CD4-positive, alpha-beta memory T cell (primary cell): ENCODE measurements at regions of chr2 and their contacts with region 1.

Region 1: DNA sequence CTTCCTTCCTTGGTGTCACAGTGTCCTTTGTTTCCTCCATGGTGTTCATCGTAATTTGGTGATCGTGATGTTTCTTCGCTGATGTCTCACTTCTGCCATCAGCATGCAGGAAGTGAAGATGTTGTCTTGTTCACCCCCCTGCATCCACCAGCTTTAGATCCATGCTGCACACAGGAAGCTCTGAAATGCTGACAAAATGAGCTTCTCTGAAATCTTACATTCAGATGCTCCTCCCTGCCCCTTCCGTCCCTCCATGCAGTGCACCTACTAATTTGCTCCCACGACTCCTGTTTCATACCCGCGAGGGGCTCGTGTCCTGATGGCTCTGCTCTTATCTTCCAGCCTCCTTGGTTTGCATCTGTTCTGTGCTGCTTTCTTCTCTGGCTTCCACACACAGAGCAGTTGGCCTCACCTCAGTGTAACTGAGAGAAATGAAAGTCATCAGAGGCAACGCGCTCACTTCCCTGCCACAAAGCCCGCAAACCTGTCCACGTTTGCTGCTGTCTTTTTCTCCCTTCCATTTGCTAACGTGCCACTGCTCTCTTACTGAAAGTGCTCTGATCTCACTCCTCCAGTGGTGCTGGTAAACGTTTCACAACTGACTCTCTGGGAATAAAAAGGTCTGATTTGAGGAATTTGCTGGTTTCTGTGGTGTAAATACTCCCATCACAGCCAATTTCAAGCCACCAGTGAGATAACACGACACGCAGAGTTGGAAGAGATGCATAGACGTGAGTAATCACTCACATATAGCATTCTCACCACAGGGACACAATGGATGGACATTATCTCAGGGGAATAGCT is 41.0 kb upstream of the MGAT4A start:
- DNase-seq: peak; percentile 82 to 92 (median 89)
- H3K4me3 ChIP-seq: peak overlapping the region; percentile 31 to 57
- H3K4me3 Mint-ChIP-seq: peak overlapping the region; percentile 92 to 99 (median 94)
- H3K27ac ChIP-seq: peak overlapping the region; percentile 63
- H3K27ac Mint-ChIP-seq: peak overlapping the region; percentile 89 to 100 (median 98)
- H3K4me1 ChIP-seq: peaks cover 79% of the 10 kb centered on the region
- H3K4me1 Mint-ChIP-seq: peaks cover 60 to 93% (median 76%) of the 10 kb centered on the region in 4 donors
- H3K27me3 ChIP-seq: no peaks in the 10 kb centered on the region
- H3K27me3 Mint-ChIP-seq: no peaks in the 10 kb centered on the region

Region 2: GRCh38 chr2:98465456-98466226 is 306.3 kb before region 1 on chr2:
- CTCF ChIA-PET with region 1: no interaction called
- POLR2A ChIA-PET with region 1: interaction called, 18 read pairs
- intact Hi-C with region 1: no loop called
- DNase-seq: peak; percentile 84 to 93 (median 84)
- H3K4me3 ChIP-seq: peak overlapping the region; percentile 17 to 33
- H3K4me3 Mint-ChIP-seq: peak overlapping the region; percentile 80 to 98 (median 90)
- H3K27ac ChIP-seq: peak overlapping the region; percentile 71
- H3K27ac Mint-ChIP-seq: peak overlapping the region; percentile 92 to 98 (median 97)
- H3K4me1 ChIP-seq: peaks cover 96% of the 10 kb centered on the region
- H3K4me1 Mint-ChIP-seq: peaks cover 71 to 93% (median 82%) of the 10 kb centered on the region in 4 donors
- H3K27me3 ChIP-seq: no peaks in the 10 kb centered on the region
- H3K27me3 Mint-ChIP-seq: no peaks in the 10 kb centered on the region

Region 3: DNA sequence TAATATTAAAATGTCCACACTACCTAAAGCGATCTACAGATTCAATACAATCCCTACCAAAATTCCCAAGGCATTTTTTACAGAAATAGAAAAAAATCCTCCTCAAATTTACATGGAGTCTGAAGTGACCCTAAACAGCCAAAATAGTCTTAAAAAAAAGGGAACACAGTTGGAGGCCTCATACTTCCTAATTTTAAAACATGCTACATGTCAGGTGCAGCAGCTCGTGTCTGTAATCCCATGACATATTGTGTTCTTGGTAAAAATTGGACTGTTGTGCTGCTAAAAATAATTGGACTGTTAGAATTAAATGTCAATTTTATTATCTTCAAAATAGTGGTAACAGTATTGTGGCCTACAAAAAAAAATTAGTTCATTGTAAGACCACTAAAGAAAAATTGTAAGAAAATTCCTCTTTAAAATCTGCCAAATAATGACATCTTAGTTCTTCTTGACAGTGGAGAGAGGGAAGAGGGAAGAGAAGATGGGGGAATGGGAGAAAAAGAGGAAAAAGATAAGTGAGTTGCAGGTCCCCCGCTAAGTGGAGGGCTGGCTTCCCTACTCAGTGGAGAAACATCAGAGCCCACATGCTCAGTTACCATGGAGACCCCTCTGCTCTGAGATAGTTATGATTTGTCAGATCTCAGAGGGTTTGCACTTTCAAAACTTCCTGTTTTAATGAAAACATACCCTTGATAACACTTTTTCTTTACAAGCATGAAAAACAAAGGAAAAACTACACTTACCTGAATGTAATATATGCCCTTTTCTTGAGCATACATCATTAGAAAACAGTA is 117.0 kb before region 1 on chr2:
- CTCF ChIA-PET with region 1: interaction called, 8 read pairs
- POLR2A ChIA-PET with region 1: interaction called, 173 read pairs
- intact Hi-C with region 1: loop called (anchors 2 kb)
- DNase-seq: peak; percentile 47 to 67 (median 50)
- H3K4me3 ChIP-seq: no peak overlapping the region
- H3K4me3 Mint-ChIP-seq: peak overlapping the region; percentile 19 to 73 (median 55)
- H3K27ac ChIP-seq: peak overlapping the region; percentile 55
- H3K27ac Mint-ChIP-seq: peak overlapping the region; percentile 88 to 94 (median 93)
- H3K4me1 ChIP-seq: peaks cover 93% of the 10 kb centered on the region
- H3K4me1 Mint-ChIP-seq: peaks cover 65 to 95% (median 80%) of the 10 kb centered on the region in 4 donors
- H3K27me3 ChIP-seq: no peaks in the 10 kb centered on the region
- H3K27me3 Mint-ChIP-seq: no peaks in the 10 kb centered on the region

Region 4: DNA sequence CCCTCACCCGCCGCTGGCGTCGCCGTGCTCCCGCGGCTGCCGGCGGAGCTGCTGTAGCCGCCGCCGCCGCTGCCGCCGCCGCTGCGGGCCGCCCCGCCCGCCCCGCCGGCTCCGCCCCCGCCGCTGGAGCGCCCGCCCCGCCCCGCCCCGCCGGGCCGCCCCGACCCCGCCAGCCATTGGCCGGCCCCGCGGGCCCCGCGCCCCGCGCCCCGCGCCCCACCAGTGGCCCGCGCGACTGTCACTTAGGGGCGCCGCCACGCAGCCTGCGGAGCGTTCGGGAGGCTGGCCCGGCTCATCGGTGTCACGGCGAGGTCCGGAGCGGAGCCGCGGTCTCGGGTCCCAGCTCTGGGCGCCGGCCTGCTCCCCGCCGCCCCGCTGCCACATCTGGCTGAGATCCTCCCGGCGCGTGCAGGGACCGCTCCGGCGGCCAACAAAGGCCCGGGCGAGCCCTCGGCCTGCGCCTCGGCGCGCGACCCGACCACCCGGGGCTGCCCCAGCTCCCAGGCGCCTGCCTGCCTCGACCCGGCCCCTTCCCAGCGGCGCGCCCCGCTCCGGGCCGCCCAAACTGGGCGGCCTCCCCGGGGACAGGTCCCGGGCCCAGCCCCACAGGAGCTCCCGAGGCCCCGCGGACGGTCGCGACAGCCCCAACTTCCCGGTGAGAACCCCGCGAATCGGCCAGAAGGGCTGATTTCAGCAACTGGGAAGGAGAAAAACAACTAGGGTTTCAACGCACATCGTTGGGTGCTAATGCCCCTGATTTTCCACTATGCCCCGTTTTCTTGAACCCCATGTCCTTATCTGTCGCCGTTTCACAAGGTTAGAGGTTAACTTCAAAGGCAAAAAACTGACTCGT is 40.7 kb before region 1 on chr2 and contains the start of gene MGAT4A:
- CTCF ChIA-PET with region 1: interaction called, 51 read pairs
- POLR2A ChIA-PET with region 1: interaction called, 565 read pairs
- intact Hi-C with region 1: loop called (anchors 1 kb)
- DNase-seq: peak; percentile 77 to 86 (median 82)
- H3K4me3 ChIP-seq: peak within 1 kb of the TSS; percentile 67 to 86
- H3K4me3 Mint-ChIP-seq: peak within 1 kb of the TSS; percentile 94 to 97 (median 94)
- H3K27ac ChIP-seq: peak within 1 kb of the TSS; percentile 95
- H3K27ac Mint-ChIP-seq: peak within 1 kb of the TSS; percentile 94 to 98 (median 96)
- H3K4me1 ChIP-seq: peaks cover 72% of the 10 kb centered on the region
- H3K4me1 Mint-ChIP-seq: peaks cover 44 to 80% (median 53%) of the 10 kb centered on the region in 4 donors
- H3K27me3 ChIP-seq: no peaks in the 10 kb centered on the region
- H3K27me3 Mint-ChIP-seq: no peaks in the 10 kb centered on the region
- total RNA-seq, gene MGAT4A: 256 to 270 TPM

Region 5: DNA sequence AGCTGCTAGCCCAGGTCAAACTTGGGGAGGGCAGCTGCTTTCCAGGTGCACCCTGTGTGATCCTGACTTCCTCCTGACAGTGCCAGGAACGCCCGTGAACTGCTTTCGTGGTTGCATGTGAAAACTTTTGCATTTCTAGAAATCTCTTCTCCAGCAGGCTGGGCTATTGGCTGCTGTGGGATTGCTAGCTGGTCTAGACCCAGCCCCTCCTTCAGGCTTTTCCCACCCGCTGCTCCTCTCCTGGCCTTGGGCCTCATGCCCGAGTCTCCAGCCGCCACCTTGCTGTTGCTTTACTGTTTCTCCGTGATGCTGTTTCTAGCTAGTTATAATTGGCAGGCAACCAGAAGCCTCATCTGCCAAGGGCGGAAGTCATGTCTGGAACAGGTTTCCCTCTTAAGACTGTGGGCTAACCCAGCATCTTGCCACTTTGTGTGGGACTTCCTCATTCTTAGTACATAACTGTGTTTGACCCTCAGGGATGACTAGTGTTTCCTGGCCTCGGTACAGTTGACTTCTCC is 14.0 kb before region 1 on chr2:
- CTCF ChIA-PET with region 1: interaction called, 17 read pairs
- POLR2A ChIA-PET with region 1: interaction called, 223 read pairs
- intact Hi-C with region 1: loop called (anchors 1 kb)
- DNase-seq: peak; percentile 68 to 87 (median 71)
- H3K4me3 ChIP-seq: peak overlapping the region in 1 of 2 donors; percentile 37
- H3K4me3 Mint-ChIP-seq: peak overlapping the region; percentile 68 to 95 (median 84)
- H3K27ac ChIP-seq: peak overlapping the region; percentile 68
- H3K27ac Mint-ChIP-seq: peak overlapping the region; percentile 93 to 99 (median 97)
- H3K4me1 ChIP-seq: peaks cover 69% of the 10 kb centered on the region
- H3K4me1 Mint-ChIP-seq: peaks cover 57 to 86% (median 71%) of the 10 kb centered on the region in 4 donors
- H3K27me3 ChIP-seq: no peaks in the 10 kb centered on the region
- H3K27me3 Mint-ChIP-seq: no peaks in the 10 kb centered on the region

Region 6: GRCh38 chr2:98822301-98823164 is 50.6 kb after region 1 on chr2:
- CTCF ChIA-PET with region 1: interaction called, 30 read pairs
- POLR2A ChIA-PET with region 1: interaction called, 55 read pairs
- intact Hi-C with region 1: loop called (anchors 1 kb)
- DNase-seq: peak; percentile 51 to 70 (median 64)
- H3K4me3 ChIP-seq: peak overlapping the region in 1 of 2 donors; percentile 43
- H3K4me3 Mint-ChIP-seq: peak overlapping the region in 5 of 8 donors; percentile 22 to 76 (median 54)
- H3K27ac ChIP-seq: peak overlapping the region; percentile 39
- H3K27ac Mint-ChIP-seq: no peak overlapping the region
- H3K4me1 ChIP-seq: peaks cover 20% of the 10 kb centered on the region
- H3K4me1 Mint-ChIP-seq: peaks cover 23 to 53% (median 36%) of the 10 kb centered on the region in 4 donors
- H3K27me3 ChIP-seq: no peaks in the 10 kb centered on the region
- H3K27me3 Mint-ChIP-seq: peaks cover 0 to 1% of the 10 kb centered on the region in 2 donors

Region 7: DNA sequence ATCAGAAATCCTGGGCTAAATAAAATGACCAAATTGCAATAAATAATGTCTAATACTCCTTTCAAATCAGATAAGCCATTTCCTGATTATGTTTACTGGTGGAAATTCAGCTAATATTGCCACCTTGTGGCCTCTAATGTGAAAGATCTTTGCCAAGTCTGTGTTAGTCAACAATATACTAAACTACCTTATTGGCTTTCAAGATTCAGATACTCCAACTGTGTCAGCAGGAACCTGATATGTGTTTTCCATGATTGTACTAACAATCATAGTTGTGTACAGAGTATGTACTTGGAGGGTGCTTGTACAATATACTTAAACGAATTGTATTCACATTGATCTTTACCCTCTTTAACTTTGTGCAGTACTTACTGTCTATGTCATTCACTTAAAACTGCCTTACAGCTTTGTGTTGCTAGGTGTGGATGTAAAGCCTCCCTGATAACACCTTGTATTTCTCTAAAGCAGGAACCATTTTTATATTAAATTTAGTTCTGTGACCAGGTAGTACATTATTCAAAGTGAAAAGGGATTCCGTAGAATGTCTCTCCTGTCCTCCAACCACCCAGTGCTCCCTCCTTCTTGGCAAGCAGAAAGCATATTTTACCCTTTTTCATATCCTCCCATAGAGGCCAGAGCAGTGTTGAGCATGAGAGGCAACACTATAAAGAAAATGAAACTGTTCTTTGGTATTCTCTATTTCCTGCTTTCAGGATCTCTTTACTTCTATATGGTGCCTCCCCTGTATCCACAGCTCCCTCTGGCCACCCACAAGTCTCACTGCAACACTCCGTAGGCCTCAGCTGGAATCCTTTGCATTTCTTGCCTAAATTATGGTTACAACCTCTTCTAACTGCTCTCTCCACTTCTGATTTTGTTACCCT is 294.4 kb after region 1 on chr2:
- CTCF ChIA-PET with region 1: no interaction called
- POLR2A ChIA-PET with region 1: no interaction called
- intact Hi-C with region 1: loop called (anchors 5 kb)
- DNase-seq: peak; percentile 26 to 49 (median 42)
- H3K4me3 ChIP-seq: peak overlapping the region in 1 of 2 donors; percentile 15
- H3K4me3 Mint-ChIP-seq: no peak overlapping the region
- H3K27ac ChIP-seq: peak overlapping the region; percentile 7
- H3K27ac Mint-ChIP-seq: no peak overlapping the region
- H3K4me1 ChIP-seq: peaks cover 18% of the 10 kb centered on the region
- H3K4me1 Mint-ChIP-seq: peaks cover 0 to 7% (median 1%) of the 10 kb centered on the region in 4 donors
- H3K27me3 ChIP-seq: no peaks in the 10 kb centered on the region
- H3K27me3 Mint-ChIP-seq: no peaks in the 10 kb centered on the region